Activated naive CD4-positive, alpha-beta T cell treated with anti-CD3 and anti-CD28 coated beads, Interleukin-2, amount 10 ng/mL, durations not matched to agents 7 days and 5 days (primary cell): ENCODE measurements at regions of chr3 and their contacts with region 1.

Region 1: GRCh38 chr3:137013955-137014688 is 56.3 kb downstream of the IL20RB start:
- DNase-seq: peak; percentile 88
- H3K4me3 Mint-ChIP-seq: peak overlapping the region; percentile 56
- H3K27ac Mint-ChIP-seq: no peak overlapping the region
- H3K4me1 Mint-ChIP-seq: peaks cover 13% of the 10 kb centered on the region
- H3K27me3 Mint-ChIP-seq: peaks cover 4% of the 10 kb centered on the region

Region 2: DNA sequence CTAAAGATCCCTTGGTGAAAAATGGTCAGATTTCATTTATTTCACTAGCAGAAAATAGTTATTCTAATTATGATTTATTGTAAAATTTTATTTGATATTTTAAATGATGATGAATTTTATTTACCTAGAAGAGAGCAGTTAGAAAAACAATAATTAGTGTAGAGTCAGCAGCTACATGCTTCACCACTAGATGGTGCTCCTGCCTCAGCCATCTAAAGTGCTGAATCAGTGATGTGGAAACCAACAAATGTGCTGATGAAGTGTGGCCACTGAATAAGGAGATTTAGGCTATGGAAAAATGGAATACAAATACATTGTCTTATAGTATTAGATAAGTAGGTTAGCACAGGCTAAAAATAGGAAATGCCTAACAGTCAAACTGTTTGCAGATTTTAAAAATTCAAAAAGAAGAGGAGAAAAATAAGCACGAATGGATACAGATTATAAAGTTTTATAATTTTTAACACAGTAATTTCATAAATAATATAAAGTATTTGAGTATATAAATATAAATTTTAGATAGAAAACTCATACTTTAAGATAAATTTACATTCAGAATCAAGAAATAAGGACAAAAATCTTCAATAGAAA is 938.8 kb before region 1 on chr3:
- CTCF ChIA-PET with region 1: interaction called, 40 read pairs
- DNase-seq: peak; percentile 83
- H3K4me3 Mint-ChIP-seq: no peak overlapping the region
- H3K27ac Mint-ChIP-seq: no peak overlapping the region
- H3K4me1 Mint-ChIP-seq: peaks cover 2% of the 10 kb centered on the region
- H3K27me3 Mint-ChIP-seq: no peaks in the 10 kb centered on the region

Region 3: GRCh38 chr3:136390574-136390973 is 623.5 kb before region 1 on chr3:
- CTCF ChIA-PET with region 1: interaction called, 13 read pairs
- DNase-seq: no peak
- H3K4me3 Mint-ChIP-seq: no peak overlapping the region
- H3K27ac Mint-ChIP-seq: no peak overlapping the region
- H3K4me1 Mint-ChIP-seq: peaks cover 4% of the 10 kb centered on the region
- H3K27me3 Mint-ChIP-seq: no peaks in the 10 kb centered on the region

Region 4: DNA sequence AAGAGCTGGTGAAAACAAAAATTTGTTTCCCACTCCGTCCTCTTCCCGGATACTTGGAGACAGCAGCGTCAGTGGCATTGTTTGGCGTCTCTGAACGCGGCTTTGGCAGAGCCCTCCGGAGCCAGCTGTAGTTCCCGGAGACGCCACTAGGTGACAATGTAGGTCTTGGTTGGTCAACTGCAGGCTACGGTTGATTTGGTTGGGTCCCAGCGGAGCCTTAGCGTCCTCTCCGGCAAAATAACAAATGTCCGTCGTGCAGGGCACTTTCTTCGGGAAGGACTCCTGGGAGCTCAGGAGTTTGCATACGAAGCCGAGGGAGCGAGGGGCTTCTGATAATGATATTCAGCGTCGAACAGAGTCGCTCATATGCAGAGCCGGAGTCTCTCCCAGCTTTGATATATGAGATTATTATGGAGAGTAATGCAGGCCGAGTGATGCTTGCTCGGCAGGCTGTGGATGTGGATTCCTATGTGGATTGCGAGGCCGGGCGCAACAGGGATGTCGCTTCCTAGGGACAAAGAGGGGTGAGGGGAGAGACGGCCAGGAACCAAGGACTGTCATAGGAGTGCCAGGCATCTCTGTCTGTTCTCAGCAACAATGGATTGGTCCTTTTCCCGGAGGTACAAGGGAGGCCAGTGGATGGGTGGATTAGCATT is 18.5 kb after region 1 on chr3:
- CTCF ChIA-PET with region 1: interaction called, 12 read pairs
- DNase-seq: peak; percentile 85
- H3K4me3 Mint-ChIP-seq: peak overlapping the region; percentile 14
- H3K27ac Mint-ChIP-seq: no peak overlapping the region
- H3K4me1 Mint-ChIP-seq: peaks cover 9% of the 10 kb centered on the region
- H3K27me3 Mint-ChIP-seq: peaks cover 48% of the 10 kb centered on the region

Region 5: DNA sequence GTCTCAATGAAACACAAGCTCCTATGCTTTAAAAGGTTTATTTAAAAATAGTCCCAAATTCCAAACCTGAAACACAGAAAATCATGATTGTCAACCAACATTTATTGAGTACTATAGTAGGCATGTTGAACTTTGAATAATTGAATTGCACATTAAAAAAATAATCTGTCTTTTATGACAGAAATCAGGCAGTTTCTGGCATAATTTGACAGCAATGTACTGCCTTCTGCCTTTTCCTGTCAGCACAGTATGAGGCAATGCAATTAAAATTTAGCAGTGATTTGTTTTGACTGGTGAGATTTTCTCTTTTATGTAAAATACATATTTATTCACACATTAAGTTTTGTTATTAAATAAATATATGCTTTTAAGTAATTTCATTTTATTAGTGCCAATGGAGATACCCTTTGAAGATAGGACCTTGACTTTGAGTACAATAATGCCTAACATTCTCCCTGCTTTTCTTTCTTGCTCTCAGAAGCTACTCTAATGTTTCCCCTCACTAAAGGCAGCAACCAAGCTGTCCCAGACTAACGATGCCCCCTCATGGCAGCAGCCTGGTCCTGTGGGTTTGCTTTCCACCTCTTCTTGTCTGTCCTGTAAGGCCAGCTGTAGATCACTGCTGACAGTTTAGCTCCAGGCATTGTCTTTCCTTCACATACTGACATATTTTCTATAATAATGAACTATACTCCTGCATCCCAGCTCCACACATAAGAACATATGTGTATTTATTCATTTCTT is 290.4 kb after region 1 on chr3:
- CTCF ChIA-PET with region 1: no interaction called
- DNase-seq: no peak
- H3K4me3 Mint-ChIP-seq: no peak overlapping the region
- H3K27ac Mint-ChIP-seq: no peak overlapping the region
- H3K4me1 Mint-ChIP-seq: no peaks in the 10 kb centered on the region
- H3K27me3 Mint-ChIP-seq: no peaks in the 10 kb centered on the region

Region 6: DNA sequence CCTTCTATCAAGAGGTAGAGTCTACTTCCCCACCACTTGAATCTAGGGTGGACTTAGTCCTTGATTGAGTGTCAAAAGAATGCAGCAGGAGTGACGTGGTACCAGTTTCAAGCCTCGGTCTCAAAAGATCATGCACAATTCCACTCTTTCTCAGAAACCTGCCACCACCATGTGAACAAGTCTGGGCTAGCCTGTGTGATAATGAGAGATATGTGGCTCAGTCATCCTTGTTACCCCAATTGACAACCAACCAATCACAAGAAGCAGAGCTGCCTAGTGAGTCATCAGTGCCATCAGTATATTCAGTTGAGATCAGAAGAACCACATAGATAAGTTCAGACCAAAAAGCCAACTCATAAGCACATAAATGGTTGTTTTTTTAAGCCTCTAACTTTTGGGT is 318.2 kb after region 1 on chr3:
- CTCF ChIA-PET with region 1: no interaction called
- DNase-seq: no peak
- H3K4me3 Mint-ChIP-seq: no peak overlapping the region
- H3K27ac Mint-ChIP-seq: no peak overlapping the region
- H3K4me1 Mint-ChIP-seq: no peaks in the 10 kb centered on the region
- H3K27me3 Mint-ChIP-seq: no peaks in the 10 kb centered on the region